ENCODE measurements at regions of chr1 and their contacts with region 1.

Region 1: DNA sequence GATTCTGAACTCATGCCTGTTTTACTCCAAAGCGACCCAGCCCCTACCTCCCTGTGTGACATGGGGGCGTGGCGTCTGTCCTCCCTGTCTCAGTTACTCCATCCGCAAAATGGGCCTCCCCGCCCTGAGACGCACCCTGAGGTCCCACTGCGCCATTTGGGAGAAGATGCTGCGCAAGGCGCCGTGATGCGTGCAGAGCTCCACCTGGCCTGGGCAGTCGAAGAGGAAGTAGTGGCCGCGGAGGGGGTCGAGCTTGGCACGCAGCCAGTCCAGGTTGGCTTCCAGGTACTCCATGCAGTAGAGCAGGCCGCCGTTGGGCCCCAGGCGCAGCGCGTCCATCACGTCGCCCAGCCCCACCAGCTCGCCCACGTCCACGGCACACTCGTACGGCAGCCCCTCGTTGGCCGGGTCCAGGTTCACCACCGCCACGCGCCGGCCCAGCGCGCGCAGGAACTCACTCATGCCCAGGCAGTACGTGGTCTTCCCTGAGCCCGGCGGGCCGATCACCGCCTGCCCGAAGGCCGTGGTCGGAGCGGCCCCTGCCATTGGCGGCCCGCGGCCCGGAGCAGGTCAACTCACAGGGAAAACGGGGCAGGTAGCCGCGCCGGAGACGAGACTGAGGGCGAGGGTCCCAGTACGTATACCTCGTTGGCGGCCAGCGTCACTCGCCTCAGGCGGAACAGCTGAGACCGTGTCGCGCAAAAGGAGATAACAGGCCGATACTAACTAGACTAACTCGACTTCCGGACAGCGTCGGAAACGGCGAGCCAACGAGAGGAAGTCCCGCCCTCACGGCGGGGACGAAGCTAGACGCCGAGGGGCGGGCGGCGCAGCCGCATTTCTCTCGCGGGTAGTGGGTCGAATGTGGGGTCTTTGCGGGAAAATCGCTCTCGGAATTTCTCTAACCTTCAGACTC is at the start of gene GPN2:
- DNase-seq: peak; percentile 94
- CTCF ChIP-seq: no peak

Region 2: GRCh38 chr1:26754086-26754874 is 135.5 kb before region 1 on chr1:
- CTCF ChIA-PET with region 1: no interaction called
- POLR2A ChIA-PET with region 1: no interaction called
- DNase-seq: no peak
- CTCF ChIP-seq: no peak

Region 3: GRCh38 chr1:26900001-26900814 is 10.4 kb after region 1 on chr1 and contains the start of gene GPATCH3:
- CTCF ChIA-PET with region 1: interaction called, 33 read pairs
- POLR2A ChIA-PET with region 1: interaction called, 9 read pairs
- DNase-seq: peak; percentile 92
- CTCF ChIP-seq: no peak